Motor neuron (in vitro differentiated cells): ENCODE measurements at regions of chr3 and their contacts with region 1.

Region 1: GRCh38 chr3:168165390-168166269 is 69.9 kb upstream of the GOLIM4 start:
- ATAC-seq: peak in 5 of 8 experiments; percentile 45 to 85 (median 80)
- H3K4me3 ChIP-seq: no peak overlapping the region
- H3K27ac ChIP-seq: no peak overlapping the region
- H3K4me1 ChIP-seq: no peaks in the 10 kb centered on the region

Region 2: DNA sequence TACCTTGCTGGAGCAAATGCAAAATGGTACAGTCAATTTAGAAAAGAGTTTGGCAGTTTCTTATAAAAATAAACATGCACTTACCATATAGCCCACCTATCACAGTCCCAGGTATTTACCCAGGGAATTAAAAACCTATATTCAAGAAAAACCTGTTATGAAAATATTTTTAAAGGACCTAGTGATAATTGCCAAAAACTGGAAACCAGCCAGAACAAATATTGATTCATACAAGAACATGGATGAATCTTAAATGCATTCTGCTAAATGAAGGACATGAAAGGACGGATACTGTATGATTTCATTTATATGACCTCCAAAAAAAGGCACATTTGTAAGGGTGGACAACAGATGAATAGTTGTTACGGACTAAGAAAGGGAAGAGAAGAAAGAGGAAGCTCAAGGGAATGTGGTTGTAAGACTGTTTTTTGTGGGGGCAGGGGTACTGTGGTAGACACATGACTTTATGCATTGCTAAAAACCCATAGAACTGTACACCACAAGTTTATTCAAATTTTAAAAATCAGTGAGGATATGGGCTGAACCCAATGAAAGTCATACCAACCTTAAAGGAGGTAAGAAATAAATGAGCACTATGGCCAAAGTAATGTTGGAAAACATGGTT is 846.5 kb before region 1 on chr3:
- in situ Hi-C with region 1: no loop called
- ATAC-seq: no peak
- H3K4me3 ChIP-seq: no peak overlapping the region
- H3K27ac ChIP-seq: no peak overlapping the region
- H3K4me1 ChIP-seq: no peaks in the 10 kb centered on the region

Region 3: DNA sequence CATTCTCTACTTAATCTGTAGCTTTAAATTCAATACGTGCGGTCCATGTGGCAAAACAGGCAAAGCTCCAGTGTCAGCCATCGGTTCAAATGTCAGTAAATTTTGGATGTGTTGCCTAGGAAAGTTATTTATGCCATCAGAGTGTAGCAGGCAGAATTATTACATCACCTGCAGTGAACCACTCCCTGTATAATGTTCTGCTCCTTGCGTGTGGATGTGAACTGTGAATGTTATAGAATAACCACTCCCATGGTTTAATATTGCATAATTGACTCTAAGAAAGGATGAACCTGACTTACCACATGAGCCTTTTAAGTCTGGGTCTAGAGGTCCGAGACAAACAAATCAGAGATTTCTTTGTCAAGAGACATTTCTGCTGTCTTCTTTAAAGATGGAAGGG is 215.4 kb before region 1 on chr3:
- in situ Hi-C with region 1: no loop called
- ATAC-seq: peak in 2 of 8 experiments; percentile 48 to 70
- H3K4me3 ChIP-seq: no peak overlapping the region
- H3K27ac ChIP-seq: no peak overlapping the region
- H3K4me1 ChIP-seq: no peaks in the 10 kb centered on the region

Region 4: DNA sequence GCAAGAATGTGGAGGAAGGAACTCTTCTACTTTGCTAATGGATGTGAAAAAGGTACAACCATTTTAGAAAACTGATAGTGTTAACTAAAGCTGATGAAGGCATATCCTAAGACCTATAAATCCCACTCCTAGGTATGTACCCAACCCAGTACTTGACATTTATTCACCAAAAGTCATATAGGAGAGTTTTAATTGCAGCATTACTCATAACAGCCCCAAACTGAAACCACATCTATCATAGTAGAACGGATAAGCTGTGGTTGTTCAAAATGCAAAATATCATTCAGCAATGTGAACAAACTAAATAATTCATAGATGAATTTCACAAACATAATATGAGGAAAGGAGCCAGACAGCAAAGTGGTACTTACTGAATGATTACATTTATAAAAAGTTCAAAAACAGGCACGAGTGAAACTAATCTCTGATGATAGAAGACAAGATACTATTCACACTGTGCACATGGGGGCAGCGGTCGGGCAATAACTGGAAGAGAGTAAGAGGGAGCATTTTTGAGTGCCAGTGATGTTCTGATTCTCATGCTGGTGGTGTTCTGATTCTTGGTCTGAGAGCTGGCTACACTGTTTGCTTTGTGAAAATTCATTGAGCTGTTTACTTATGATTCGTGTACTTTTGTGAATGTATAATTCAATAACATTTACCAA is 104.2 kb before region 1 on chr3:
- in situ Hi-C with region 1: loop called in 1 of 9 experiments (anchors 25 kb)
- ATAC-seq: peak in 2 of 8 experiments; percentile 30 to 71
- H3K4me3 ChIP-seq: no peak overlapping the region
- H3K27ac ChIP-seq: no peak overlapping the region
- H3K4me1 ChIP-seq: peaks cover 0 to 9% of the 10 kb centered on the region in 2 donors

Region 5: GRCh38 chr3:168425936-168426595 is 260.4 kb after region 1 on chr3:
- in situ Hi-C with region 1: no loop called
- ATAC-seq: peak in 3 of 8 experiments; percentile 91 to 97 (median 97)
- H3K4me3 ChIP-seq: no peak overlapping the region
- H3K27ac ChIP-seq: no peak overlapping the region
- H3K4me1 ChIP-seq: peaks cover 0 to 4% of the 10 kb centered on the region in 2 donors